IMR-90 (cell line): ENCODE measurements at regions of chr11 and their contacts with region 1.

Region 1: GRCh38 chr11:9748361-9748970 is 84.6 kb downstream of the SWAP70 start:
- DNase-seq: peak; percentile 79
- ATAC-seq: peak; percentile 86
- H3K4me3 ChIP-seq: no peak overlapping the region
- H3K27ac ChIP-seq: no peak overlapping the region
- H3K4me1 ChIP-seq: peaks cover 7% of the 10 kb centered on the region
- H3K27me3 ChIP-seq: no peaks in the 10 kb centered on the region
- CTCF ChIP-seq: peak; percentile 79
- POLR2A ChIP-seq: no peak
- RAD21 ChIP-seq: peak; percentile 88

Region 2: DNA sequence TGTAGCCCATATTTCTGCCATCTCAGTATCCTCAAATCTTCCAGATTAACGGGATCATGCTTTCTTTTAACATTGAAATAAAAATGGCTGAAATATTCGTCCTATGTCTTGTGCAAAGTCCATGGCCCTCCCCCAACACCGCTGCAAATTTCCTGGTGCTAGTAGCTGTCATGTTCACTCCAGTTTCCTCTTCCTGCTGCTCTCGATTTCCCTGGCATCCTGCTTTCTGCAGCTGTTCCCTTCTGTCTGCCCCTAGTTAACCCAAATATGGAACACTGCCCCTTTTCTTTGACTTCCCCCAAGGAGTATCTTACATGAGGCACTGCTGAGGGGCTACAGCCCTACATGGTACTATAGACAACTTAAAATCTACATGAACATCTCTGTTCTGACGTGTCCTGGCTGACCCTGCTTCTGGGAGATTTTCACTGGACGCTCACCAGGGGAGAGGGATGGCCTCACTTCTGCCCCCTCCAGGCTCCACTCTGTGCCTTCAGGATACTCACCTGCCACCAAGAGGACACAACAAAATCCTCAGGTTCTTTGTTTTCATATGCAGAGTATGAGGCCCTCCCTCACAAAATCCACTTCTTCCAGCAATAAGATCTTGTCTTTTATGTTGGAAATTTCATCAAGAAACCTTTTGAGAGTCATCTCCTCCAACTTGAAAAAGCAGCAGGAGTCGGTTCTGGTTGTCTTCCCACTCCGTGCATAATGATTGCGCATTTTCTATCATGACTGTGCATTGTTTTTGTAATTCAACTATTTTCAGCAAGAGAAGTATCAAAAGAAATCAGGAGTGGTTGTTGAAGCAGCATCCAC is 627.6 kb before region 1 on chr11:
- CTCF ChIA-PET with region 1: no interaction called
- POLR2A ChIA-PET with region 1: no interaction called
- dilution Hi-C with region 1: no loop called
- in situ Hi-C with region 1: no loop called
- intact Hi-C with region 1: no loop called
- DNase-seq: no peak
- ATAC-seq: peak; percentile 48; the same call in 1 of the 2 replicates
- H3K4me3 ChIP-seq: no peak overlapping the region
- H3K27ac ChIP-seq: no peak overlapping the region
- H3K4me1 ChIP-seq: no peaks in the 10 kb centered on the region
- H3K27me3 ChIP-seq: no peaks in the 10 kb centered on the region
- CTCF ChIP-seq: peak; percentile 22; the same call in 1 of the 2 replicates
- POLR2A ChIP-seq: no peak
- RAD21 ChIP-seq: 0 out of 2 replicates have a peak, but pooled peaks have one; percentile 13

Region 3: GRCh38 chr11:9384535-9385303 is 363.7 kb before region 1 on chr11 and contains the start of gene IPO7:
- CTCF ChIA-PET with region 1: no interaction called
- POLR2A ChIA-PET with region 1: interaction called, 17 read pairs
- dilution Hi-C with region 1: no loop called
- in situ Hi-C with region 1: no loop called
- intact Hi-C with region 1: no loop called
- DNase-seq: peak; percentile 92
- ATAC-seq: peak; percentile 92
- H3K4me3 ChIP-seq: peak within 1 kb of the TSS; percentile 73
- H3K27ac ChIP-seq: peak within 1 kb of the TSS; percentile 80
- H3K4me1 ChIP-seq: no peaks in the 10 kb centered on the region; the same call in 1 of the 2 replicates
- H3K27me3 ChIP-seq: no peaks in the 10 kb centered on the region
- CTCF ChIP-seq: peak; percentile 47
- POLR2A ChIP-seq: peak; percentile 93
- RAD21 ChIP-seq: peak; percentile 28
- total RNA-seq, gene IPO7: 110 and 124 TPM in 2 replicates

Region 4: GRCh38 chr11:9460322-9461067 is 288.0 kb before region 1 on chr11 and contains the start of gene ZNF143:
- CTCF ChIA-PET with region 1: no interaction called
- POLR2A ChIA-PET with region 1: no interaction called
- dilution Hi-C with region 1: no loop called
- in situ Hi-C with region 1: no loop called
- intact Hi-C with region 1: loop called (anchors 2 kb)
- DNase-seq: peak; percentile 100
- ATAC-seq: peak; percentile 94
- H3K4me3 ChIP-seq: peak within 1 kb of the TSS; percentile 81
- H3K27ac ChIP-seq: peak within 1 kb of the TSS; percentile 95
- H3K4me1 ChIP-seq: no peaks in the 10 kb centered on the region
- H3K27me3 ChIP-seq: no peaks in the 10 kb centered on the region
- CTCF ChIP-seq: no peak
- POLR2A ChIP-seq: no peak; the same call in 1 of the 2 replicates
- RAD21 ChIP-seq: no peak
- total RNA-seq, gene ZNF143: 49.6 and 58.9 TPM in 2 replicates

Region 5: DNA sequence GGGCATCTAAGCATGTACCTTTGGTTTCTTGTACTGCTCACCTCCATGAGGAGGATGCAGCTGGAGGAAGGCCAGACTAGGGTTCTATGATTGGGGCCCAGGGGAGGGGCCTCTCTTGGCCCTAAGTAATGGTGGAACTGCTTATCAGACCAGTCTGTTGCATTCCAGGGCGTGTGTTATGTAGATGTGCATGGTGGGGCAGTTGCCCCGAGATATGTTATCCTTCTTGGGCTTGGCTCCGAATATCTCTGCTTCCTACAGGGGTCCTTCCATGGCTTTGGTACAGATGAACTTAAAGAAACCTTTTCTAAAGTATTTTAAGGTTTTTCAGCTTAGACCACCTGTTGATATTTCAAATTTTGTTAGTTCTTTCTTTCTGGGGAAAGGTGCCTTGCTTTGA is 41.4 kb after region 1 on chr11:
- CTCF ChIA-PET with region 1: no interaction called
- POLR2A ChIA-PET with region 1: no interaction called
- dilution Hi-C with region 1: no loop called
- in situ Hi-C with region 1: no loop called
- intact Hi-C with region 1: loop called (anchors 1 kb)
- DNase-seq: no peak
- ATAC-seq: no peak
- H3K4me3 ChIP-seq: no peak overlapping the region
- H3K27ac ChIP-seq: peak overlapping the region; percentile 21; the same call in 1 of the 2 replicates
- H3K4me1 ChIP-seq: peaks cover 14% of the 10 kb centered on the region
- H3K27me3 ChIP-seq: no peaks in the 10 kb centered on the region
- CTCF ChIP-seq: no peak
- POLR2A ChIP-seq: no peak
- RAD21 ChIP-seq: no peak